Heart right ventricle (tissue), 16 donors: ENCODE measurements at regions of chr14 and their contacts with region 1.

Region 1: GRCh38 chr14:70907176-70907995 is at the start of gene PCNX1:
- DNase-seq: peak; percentile 89 to 91
- ATAC-seq: peak; percentile 81 to 90 (median 88)
- H3K4me3 ChIP-seq: peak within 1 kb of the TSS; percentile 91 to 98 (median 94)
- H3K27ac ChIP-seq: peak within 1 kb of the TSS; percentile 88 to 98 (median 94)
- H3K4me1 ChIP-seq: peaks cover 7 to 67% (median 59%) of the 10 kb centered on the region in 9 donors
- H3K27me3 ChIP-seq: no peaks in the 10 kb centered on the region
- CTCF ChIP-seq: peak; percentile 69 to 97 (median 91)
- total RNA-seq, gene PCNX1: 27.4 to 66.6 (median 48.2) TPM

Region 2: DNA sequence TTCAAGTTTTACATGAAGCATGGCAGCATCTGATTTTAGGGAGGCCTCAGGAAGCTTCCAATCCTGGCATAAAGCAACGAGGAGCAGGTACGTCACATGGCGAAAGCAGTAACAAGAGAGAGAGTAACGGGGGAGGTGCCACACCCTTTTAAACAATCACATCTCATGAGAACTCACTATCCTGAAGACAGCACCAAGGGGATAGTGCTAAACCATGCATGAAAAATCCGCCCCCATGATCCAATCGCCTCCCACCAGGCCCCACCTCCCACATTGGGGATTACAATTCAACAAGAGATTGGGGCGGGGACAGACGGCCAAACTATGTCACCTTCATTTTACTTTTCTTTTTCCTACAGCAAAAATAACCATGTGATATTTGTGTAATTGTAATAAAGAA is 90.9 kb before region 1 on chr14:
- intact Hi-C with region 1: loop called in 7 of 10 experiments (anchors 1 to 5 kb)
- DNase-seq: no peak
- ATAC-seq: no peak
- H3K4me3 ChIP-seq: no peak overlapping the region
- H3K27ac ChIP-seq: no peak overlapping the region
- H3K4me1 ChIP-seq: peaks cover 0 to 20% (median 5%) of the 10 kb centered on the region in 9 donors
- H3K27me3 ChIP-seq: peaks cover 0 to 39% (median 5%) of the 10 kb centered on the region in 7 donors
- CTCF ChIP-seq: no peak

Region 3: GRCh38 chr14:70821584-70822529 is 85.5 kb before region 1 on chr14:
- intact Hi-C with region 1: loop called in 7 of 10 experiments (anchors 1 to 5 kb)
- DNase-seq: peak; percentile 46 to 53
- ATAC-seq: peak; percentile 42 to 76 (median 60)
- H3K4me3 ChIP-seq: peak overlapping the region; percentile 40 to 80 (median 72)
- H3K27ac ChIP-seq: peak overlapping the region in 9 of 10 donors; percentile 23 to 79 (median 65)
- H3K4me1 ChIP-seq: peaks cover 6 to 29% (median 17%) of the 10 kb centered on the region in 9 donors
- H3K27me3 ChIP-seq: peaks cover 0 to 35% (median 6%) of the 10 kb centered on the region in 7 donors
- CTCF ChIP-seq: no peak

Region 4: GRCh38 chr14:70832536-70833305 is 74.7 kb before region 1 on chr14:
- intact Hi-C with region 1: loop called in 1 of 10 experiments (anchors 10 kb)
- DNase-seq: no peak
- ATAC-seq: peak; percentile 26 to 93 (median 75)
- H3K4me3 ChIP-seq: peak overlapping the region in 1 of 10 donors; percentile 6
- H3K27ac ChIP-seq: peak overlapping the region in 5 of 10 donors; percentile 14 to 54 (median 24)
- H3K4me1 ChIP-seq: peaks cover 0 to 22% (median 12%) of the 10 kb centered on the region in 9 donors
- H3K27me3 ChIP-seq: no peaks in the 10 kb centered on the region
- CTCF ChIP-seq: no peak

Region 5: GRCh38 chr14:70842851-70843462 is 64.4 kb before region 1 on chr14:
- intact Hi-C with region 1: loop called in 2 of 10 experiments (anchors 1 to 10 kb)
- DNase-seq: peak in 1 of 2 donors; percentile 23
- ATAC-seq: peak; percentile 56 to 92 (median 82)
- H3K4me3 ChIP-seq: no peak overlapping the region
- H3K27ac ChIP-seq: peak overlapping the region in 8 of 10 donors; percentile 5 to 80 (median 72)
- H3K4me1 ChIP-seq: peaks cover 0 to 29% (median 9%) of the 10 kb centered on the region in 9 donors
- H3K27me3 ChIP-seq: no peaks in the 10 kb centered on the region
- CTCF ChIP-seq: no peak

Region 6: GRCh38 chr14:70921669-70922068 is 14.3 kb after region 1 on chr14:
- intact Hi-C with region 1: no loop called
- DNase-seq: no peak
- ATAC-seq: no peak
- H3K4me3 ChIP-seq: no peak overlapping the region
- H3K27ac ChIP-seq: no peak overlapping the region
- H3K4me1 ChIP-seq: peaks cover 0 to 76% (median 42%) of the 10 kb centered on the region in 9 donors
- H3K27me3 ChIP-seq: no peaks in the 10 kb centered on the region
- CTCF ChIP-seq: no peak

Region 7: GRCh38 chr14:70955543-70956480 is 48.4 kb after region 1 on chr14:
- intact Hi-C with region 1: loop called in 9 of 10 experiments (anchors 5 to 10 kb)
- DNase-seq: no peak
- ATAC-seq: peak in 6 of 8 donors; percentile 46 to 66 (median 62)
- H3K4me3 ChIP-seq: no peak overlapping the region
- H3K27ac ChIP-seq: no peak overlapping the region
- H3K4me1 ChIP-seq: peaks cover 0 to 52% (median 39%) of the 10 kb centered on the region in 9 donors
- H3K27me3 ChIP-seq: no peaks in the 10 kb centered on the region
- CTCF ChIP-seq: peak in 8 of 9 donors; percentile 19 to 72 (median 56)

Region 8: GRCh38 chr14:70972107-70972976 is 65.0 kb after region 1 on chr14:
- intact Hi-C with region 1: loop called in 6 of 10 experiments (anchors 1 to 5 kb)
- DNase-seq: peak; percentile 55 to 86
- ATAC-seq: peak; percentile 71 to 94 (median 88)
- H3K4me3 ChIP-seq: no peak overlapping the region
- H3K27ac ChIP-seq: peak overlapping the region in 1 of 10 donors; percentile 42
- H3K4me1 ChIP-seq: peaks cover 0 to 25% (median 10%) of the 10 kb centered on the region in 9 donors
- H3K27me3 ChIP-seq: no peaks in the 10 kb centered on the region
- CTCF ChIP-seq: peak; percentile 87 to 97 (median 94)